ENCODE measurements at regions of chr15 and their contacts with region 1.

Region 1: GRCh38 chr15:88878720-88879184 is 16.6 kb downstream of the HAPLN3 start:
- DNase-seq: no peak
- H3K4me3 ChIP-seq: no peak overlapping the region
- CTCF ChIP-seq: peak; percentile 90

Region 2: DNA sequence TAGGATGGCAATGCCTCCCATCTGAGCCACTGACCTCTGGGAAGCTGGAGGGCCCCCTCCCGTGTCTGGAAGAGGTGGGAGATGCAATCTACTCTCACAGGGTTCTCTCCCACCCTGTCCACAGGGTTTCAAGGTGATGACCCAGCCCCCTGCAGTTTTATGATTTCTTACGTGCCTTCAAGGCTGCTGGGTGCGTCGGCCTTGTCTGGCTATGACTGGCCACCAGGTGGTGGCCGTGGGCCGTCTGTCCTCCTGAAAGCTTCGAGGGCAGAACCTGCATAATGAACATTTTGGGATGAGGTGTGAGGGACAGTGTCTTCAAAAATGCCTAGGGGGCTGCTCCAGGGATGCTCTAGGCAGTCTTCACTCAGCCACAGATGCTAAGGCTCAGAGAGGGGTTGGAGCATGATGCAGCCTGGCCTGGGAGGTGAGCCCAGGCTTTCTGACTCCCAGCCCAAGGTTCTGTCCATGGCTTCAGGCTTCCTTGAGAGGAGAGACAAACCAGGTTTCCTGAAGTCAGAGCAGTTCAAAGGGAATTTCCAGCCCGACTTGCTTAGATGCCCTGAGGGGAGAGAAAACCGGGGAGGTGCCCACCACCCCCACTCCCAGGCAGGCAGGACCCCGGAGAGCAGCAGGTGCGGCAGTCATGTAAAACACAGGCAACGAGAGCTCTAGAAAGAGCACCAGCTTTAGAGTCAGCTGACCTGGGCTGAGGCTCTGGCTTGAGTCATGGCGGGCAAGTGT is 221.3 kb before region 1 on chr15:
- CTCF ChIA-PET with region 1: interaction called, 42 read pairs
- POLR2A ChIA-PET with region 1: interaction called, 4 read pairs
- DNase-seq: no peak
- H3K4me3 ChIP-seq: no peak overlapping the region
- CTCF ChIP-seq: peak; percentile 86

Region 3: GRCh38 chr15:88752951-88753350 is 125.8 kb before region 1 on chr15:
- CTCF ChIA-PET with region 1: no interaction called
- POLR2A ChIA-PET with region 1: no interaction called
- DNase-seq: no peak
- H3K4me3 ChIP-seq: no peak overlapping the region
- CTCF ChIP-seq: no peak

Region 4: GRCh38 chr15:88865498-88866099 is 13.2 kb before region 1 on chr15:
- CTCF ChIA-PET with region 1: interaction called, 34 read pairs
- POLR2A ChIA-PET with region 1: no interaction called
- DNase-seq: no peak
- H3K4me3 ChIP-seq: no peak overlapping the region
- CTCF ChIP-seq: no peak

Region 5: DNA sequence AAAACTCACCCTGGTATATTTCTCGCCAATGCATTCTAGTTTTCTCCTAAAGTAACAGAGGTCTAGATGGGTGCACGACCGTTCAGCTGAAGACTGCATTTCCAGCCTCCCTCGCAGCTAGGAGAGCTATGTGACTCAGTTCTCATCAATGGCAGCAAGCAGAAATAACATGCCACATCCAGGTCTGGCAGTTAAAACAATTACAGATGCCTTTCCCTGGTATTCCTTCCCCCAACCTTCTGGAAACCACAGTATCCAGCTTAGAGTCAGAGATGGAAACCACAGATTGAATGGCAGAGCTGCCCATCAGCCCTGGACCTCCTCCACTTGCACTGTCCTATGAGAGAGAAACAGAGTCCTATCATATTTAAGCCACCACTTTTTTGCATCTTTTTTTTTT is 11.7 kb after region 1 on chr15:
- CTCF ChIA-PET with region 1: interaction called, 33 read pairs
- POLR2A ChIA-PET with region 1: interaction called, 3 read pairs
- DNase-seq: no peak
- H3K4me3 ChIP-seq: no peak overlapping the region
- CTCF ChIP-seq: no peak

Region 6: GRCh38 chr15:89003865-89004725 is 125.3 kb after region 1 on chr15:
- CTCF ChIA-PET with region 1: interaction called, 17 read pairs
- POLR2A ChIA-PET with region 1: no interaction called
- DNase-seq: no peak
- H3K4me3 ChIP-seq: no peak overlapping the region
- CTCF ChIP-seq: peak; percentile 82

Region 7: DNA sequence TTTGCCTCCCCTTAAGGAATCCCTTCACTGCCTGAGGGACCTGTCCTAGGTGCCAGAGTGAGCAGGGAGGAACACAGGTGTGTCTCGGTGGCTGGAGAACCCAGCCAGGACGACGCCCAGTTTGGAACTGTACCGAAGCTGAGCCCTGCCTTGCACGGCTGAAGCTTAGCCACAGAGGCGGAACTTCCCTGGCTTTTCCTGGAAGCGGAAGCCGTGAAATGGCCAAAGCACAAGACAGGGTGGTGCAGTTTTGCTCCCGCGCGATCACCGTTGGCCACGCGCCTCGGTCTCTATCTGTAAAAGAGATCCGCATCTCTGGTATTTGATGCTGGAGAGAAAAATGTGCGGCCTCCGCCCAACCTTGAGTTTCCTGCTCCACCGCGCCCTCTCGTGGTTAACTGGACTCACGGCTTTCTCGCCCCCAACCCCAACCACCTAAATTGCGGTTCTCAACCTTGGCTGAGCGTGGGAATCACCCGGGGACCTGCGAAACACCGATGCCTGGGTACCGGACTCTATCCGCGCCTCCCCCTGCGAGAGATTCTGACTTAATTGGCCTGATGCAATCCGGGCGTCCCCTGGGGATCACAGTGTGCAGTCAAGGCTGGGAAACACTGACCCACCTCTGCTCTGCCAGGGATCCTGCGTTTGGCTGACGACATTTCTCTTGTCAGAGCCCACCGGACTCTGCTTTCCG is 138.8 kb after region 1 on chr15:
- CTCF ChIA-PET with region 1: interaction called, 14 read pairs
- POLR2A ChIA-PET with region 1: no interaction called
- DNase-seq: peak; percentile 69
- H3K4me3 ChIP-seq: peak overlapping the region; percentile 45
- CTCF ChIP-seq: peak; percentile 82

Region 8: DNA sequence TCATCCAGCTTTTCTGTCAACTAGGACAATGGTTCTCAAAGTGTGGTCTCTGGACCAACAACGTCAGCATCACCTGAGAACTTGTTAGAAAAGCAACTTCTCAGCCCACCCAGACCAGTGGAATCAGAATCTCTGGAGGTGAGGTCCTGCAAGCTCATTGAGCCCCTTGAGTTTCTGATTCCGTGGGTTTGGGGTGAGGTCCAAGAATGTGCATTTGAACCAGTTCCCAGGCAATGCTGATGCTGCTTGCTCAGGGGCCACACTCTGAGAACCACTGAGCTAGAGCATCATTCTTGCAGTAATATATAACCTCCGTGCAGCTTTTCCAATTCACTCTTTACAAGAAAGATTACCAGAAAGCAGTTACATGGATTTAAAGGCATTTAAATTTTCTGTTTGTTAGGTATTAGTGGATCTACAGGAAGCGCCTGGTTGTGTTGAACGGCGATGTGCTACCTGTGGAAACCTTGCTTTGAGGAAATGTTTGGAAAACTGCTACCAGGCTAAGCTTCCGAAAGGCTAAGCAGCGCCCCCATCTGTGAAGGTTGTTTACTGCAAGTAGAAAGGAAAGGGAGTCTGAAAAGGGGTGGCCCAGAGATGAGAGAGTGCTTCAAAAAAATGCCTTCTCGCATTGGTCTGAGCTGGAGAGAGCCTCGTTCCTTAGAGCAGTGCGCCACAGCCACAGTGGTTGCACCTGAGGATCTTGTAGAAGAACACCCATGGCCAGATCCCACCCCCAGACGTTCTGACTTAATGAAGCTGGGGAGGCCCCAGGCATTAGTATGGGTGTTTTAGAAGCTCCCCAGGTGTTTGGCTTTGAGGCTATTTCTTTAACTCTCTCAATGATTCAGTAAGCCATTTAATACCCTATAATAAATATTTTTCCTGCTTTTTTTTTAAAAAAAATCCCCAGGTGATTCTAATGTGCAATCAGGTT is 292.7 kb after region 1 on chr15:
- CTCF ChIA-PET with region 1: interaction called, 18 read pairs
- POLR2A ChIA-PET with region 1: no interaction called
- DNase-seq: no peak
- H3K4me3 ChIP-seq: no peak overlapping the region
- CTCF ChIP-seq: peak; percentile 74

Measured in AG04449 (cell line).